ENCODE measurements at regions of chr3 and their contacts with region 1.

Region 1: DNA sequence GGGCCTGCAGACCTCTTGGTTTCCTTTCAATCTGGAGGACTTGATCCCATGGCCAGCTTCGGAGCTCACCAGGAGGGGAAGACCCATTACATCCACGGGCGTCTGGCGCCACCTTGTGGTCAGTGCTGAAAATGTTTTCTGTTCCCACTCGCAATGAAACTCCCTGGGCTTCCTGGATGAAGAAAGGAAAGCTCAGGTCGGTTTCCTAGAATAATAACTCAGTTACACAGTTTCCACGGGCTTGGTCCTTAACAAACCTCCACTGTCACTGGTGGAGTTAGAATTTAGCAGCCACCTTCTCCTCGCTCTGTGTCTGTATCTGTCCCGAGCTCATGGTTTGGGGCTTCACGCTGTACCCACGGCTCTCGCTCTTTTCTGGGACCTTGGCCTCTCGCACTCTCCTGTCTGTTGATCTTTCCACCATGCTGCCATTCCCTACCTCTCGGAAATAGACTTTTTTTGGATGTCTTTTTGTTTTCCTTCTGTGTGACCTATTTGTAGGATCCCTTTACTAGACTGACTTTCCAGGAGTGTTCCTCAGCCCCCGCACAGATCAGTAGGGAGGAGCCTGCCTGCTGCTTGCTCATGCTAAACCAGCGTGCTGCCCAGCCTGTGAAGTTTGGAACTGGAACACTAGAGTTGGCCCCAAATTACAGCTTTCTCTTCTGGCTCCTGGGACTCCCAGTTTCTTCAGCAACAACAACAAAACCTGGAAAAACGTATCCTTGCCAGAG is 56.3 kb downstream of the IL20RB start:
- DNase-seq: peak; percentile 88 to 92 (median 90)
- ATAC-seq: peak; percentile 93 to 98 (median 96)
- H3K4me3 ChIP-seq: peak overlapping the region in 11 of 12 donors; percentile 21 to 62 (median 55)
- H3K27ac ChIP-seq: peak overlapping the region in 10 of 12 donors; percentile 0 to 87 (median 56)
- H3K4me1 ChIP-seq: peaks cover 0 to 18% (median 6%) of the 10 kb centered on the region in 12 donors
- H3K27me3 ChIP-seq: no peaks in the 10 kb centered on the region
- CTCF ChIP-seq: peak; percentile 82 to 95 (median 91)
- POLR2A ChIP-seq: no peak

Region 2: DNA sequence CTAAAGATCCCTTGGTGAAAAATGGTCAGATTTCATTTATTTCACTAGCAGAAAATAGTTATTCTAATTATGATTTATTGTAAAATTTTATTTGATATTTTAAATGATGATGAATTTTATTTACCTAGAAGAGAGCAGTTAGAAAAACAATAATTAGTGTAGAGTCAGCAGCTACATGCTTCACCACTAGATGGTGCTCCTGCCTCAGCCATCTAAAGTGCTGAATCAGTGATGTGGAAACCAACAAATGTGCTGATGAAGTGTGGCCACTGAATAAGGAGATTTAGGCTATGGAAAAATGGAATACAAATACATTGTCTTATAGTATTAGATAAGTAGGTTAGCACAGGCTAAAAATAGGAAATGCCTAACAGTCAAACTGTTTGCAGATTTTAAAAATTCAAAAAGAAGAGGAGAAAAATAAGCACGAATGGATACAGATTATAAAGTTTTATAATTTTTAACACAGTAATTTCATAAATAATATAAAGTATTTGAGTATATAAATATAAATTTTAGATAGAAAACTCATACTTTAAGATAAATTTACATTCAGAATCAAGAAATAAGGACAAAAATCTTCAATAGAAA is 938.8 kb before region 1 on chr3:
- intact Hi-C with region 1: loop called in 9 of 10 experiments (anchors 2 to 5 kb)
- DNase-seq: peak; percentile 54 to 68 (median 67)
- ATAC-seq: peak; percentile 78 to 84 (median 80)
- H3K4me3 ChIP-seq: no peak overlapping the region
- H3K27ac ChIP-seq: peak overlapping the region in 8 of 12 donors; percentile 0 to 59 (median 36)
- H3K4me1 ChIP-seq: peaks cover 0 to 33% (median 17%) of the 10 kb centered on the region in 12 donors
- H3K27me3 ChIP-seq: no peaks in the 10 kb centered on the region
- CTCF ChIP-seq: peak; percentile 78 to 97 (median 93)
- POLR2A ChIP-seq: no peak

Region 3: DNA sequence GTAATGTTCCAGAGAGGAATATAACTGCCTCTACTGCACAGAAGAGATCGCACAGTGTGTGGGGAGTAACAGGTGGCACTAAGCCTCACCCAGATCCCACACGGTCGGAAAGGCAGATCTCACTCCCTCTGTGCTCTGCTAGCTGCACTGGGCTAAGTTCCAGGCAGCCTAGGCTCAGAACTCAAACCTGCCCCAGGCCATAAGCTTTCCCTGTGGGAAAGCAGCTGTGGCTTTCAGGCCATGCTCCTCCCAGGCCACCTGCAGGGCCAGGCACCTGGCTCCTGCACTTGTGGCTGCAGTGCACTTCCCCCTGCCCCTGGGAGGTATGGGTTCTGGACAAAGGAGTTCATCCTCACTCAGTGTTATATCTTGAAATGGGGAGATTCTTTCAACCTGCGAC is 736.5 kb before region 1 on chr3:
- intact Hi-C with region 1: no loop called
- DNase-seq: no peak
- ATAC-seq: peak in 3 of 4 donors; percentile 36 to 69 (median 42)
- H3K4me3 ChIP-seq: no peak overlapping the region
- H3K27ac ChIP-seq: no peak overlapping the region
- H3K4me1 ChIP-seq: peaks cover 0 to 18% (median 9%) of the 10 kb centered on the region in 12 donors
- H3K27me3 ChIP-seq: no peaks in the 10 kb centered on the region
- CTCF ChIP-seq: no peak
- POLR2A ChIP-seq: no peak

Region 4: GRCh38 chr3:136396916-136397315 is 617.2 kb before region 1 on chr3:
- intact Hi-C with region 1: loop called in 7 of 10 experiments (anchors 5 to 10 kb)
- DNase-seq: no peak
- ATAC-seq: no peak
- H3K4me3 ChIP-seq: no peak overlapping the region
- H3K27ac ChIP-seq: no peak overlapping the region
- H3K4me1 ChIP-seq: peaks cover 0 to under 1% (median 0%) of the 10 kb centered on the region in 12 donors
- H3K27me3 ChIP-seq: no peaks in the 10 kb centered on the region
- CTCF ChIP-seq: no peak
- POLR2A ChIP-seq: no peak

Region 5: DNA sequence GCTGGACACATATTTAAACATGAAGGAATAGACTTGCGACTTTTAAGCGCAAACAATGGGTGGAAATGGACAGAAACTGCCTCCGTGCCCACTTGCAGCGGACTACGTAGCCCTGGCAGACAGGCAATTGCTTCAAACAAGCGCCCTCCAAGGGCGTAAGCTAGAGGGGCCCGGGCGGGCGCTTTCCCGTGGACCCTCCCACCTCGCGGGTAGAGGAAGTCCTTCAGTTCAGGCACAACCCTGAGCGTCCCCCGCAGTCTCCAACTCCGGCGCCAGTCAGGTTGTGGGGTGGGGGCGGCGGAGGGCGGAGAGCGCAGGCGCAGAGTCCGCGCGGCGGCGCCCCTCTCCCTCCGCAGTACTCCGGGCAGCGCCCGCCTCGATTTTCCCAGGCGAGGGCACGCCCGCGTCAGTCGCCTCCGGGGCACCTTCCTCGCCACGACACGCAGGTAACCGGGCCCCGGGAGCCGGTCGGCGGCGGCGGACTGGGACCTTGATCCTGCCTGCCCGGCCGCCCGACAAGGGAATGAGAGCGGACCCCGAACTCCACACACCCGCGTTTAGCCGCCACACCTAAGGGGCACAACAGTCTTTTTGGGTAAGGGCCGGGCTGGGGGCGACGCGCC is 195.2 kb before region 1 on chr3 and contains the start of gene SLC35G2:
- intact Hi-C with region 1: loop called (anchors 1 to 10 kb)
- DNase-seq: peak; percentile 57 to 78 (median 77)
- ATAC-seq: peak; percentile 68 to 83 (median 78)
- H3K4me3 ChIP-seq: peak within 1 kb of the TSS; percentile 63 to 92 (median 77)
- H3K27ac ChIP-seq: peak within 1 kb of the TSS; percentile 73 to 97 (median 88)
- H3K4me1 ChIP-seq: peaks cover 0 to 32% (median 8%) of the 10 kb centered on the region in 12 donors
- H3K27me3 ChIP-seq: peaks cover 0 to 17% (median 0%) of the 10 kb centered on the region in 9 donors
- CTCF ChIP-seq: peak in 2 of 12 donors; percentile 9 to 23
- POLR2A ChIP-seq: no peak
- total RNA-seq, gene SLC35G2: 1.0 to 5.3 (median 3.6) TPM

Region 6: DNA sequence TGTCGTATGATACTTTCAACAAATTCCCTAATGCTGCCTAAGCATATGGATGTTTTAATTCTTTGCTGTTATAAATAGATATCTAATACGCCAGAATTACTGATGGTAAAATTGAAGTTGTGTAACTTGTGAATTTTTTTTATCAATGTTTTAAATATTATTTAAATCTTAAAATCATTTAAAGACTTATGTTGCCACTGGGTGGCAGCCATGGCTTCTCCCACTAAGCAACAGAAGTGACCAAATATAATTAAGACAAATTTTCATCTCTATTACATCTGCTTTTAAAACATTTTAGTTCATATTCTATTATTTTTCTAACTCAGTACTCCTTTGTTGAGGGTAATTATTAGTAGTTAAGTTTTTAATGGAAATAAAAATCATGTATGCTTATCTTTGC is 64.4 kb before region 1 on chr3:
- intact Hi-C with region 1: loop called in 4 of 10 experiments (anchors 5 to 10 kb)
- DNase-seq: no peak
- ATAC-seq: no peak
- H3K4me3 ChIP-seq: no peak overlapping the region
- H3K27ac ChIP-seq: peak overlapping the region in 1 of 12 donors; percentile 15
- H3K4me1 ChIP-seq: peaks cover 0 to 48% (median 12%) of the 10 kb centered on the region in 12 donors
- H3K27me3 ChIP-seq: no peaks in the 10 kb centered on the region
- CTCF ChIP-seq: peak in 3 of 12 donors; percentile 27 to 44 (median 35)
- POLR2A ChIP-seq: no peak

Measured in heart left ventricle (tissue), 16 donors.